ENCODE measurements at regions of chr1 and their contacts with region 1.

Region 1: DNA sequence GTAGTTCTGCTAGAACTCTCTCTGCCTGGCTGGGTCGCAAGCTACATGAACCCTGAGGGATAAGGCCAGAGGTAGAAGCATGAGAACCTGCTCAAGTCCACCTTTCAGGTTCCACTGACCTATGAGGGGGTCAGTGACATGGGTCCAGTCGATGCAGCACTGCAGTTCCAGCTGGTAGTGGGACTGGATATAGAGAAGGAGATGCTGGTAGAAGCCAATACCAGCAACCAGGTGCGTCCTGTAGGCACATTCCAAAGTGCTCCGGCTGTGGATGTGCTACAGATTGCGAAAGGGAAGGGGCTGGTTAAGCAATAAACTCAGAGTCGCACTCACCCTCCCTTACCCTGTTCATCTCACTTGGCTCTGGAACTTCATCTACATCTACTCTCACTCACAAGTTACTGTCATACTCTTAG is 5.7 kb downstream of the SMG5 start:
- DNase-seq: no peak
- H3K4me3 ChIP-seq: no peak overlapping the region
- H3K27ac ChIP-seq: no peak overlapping the region
- H3K4me1 ChIP-seq: peaks cover 8% of the 10 kb centered on the region
- H3K27me3 ChIP-seq: no peaks in the 10 kb centered on the region
- CTCF ChIP-seq: no peak

Region 2: GRCh38 chr1:156146020-156146768 is 130.8 kb before region 1 on chr1:
- CTCF ChIA-PET with region 1: interaction called, 10 read pairs
- POLR2A ChIA-PET with region 1: no interaction called
- intact Hi-C with region 1: no loop called
- DNase-seq: peak; percentile 93
- H3K4me3 ChIP-seq: peak overlapping the region; percentile 26
- H3K27ac ChIP-seq: no peak overlapping the region
- H3K4me1 ChIP-seq: peaks cover 10% of the 10 kb centered on the region
- H3K27me3 ChIP-seq: no peaks in the 10 kb centered on the region
- CTCF ChIP-seq: peak; percentile 78

Region 3: GRCh38 chr1:156338180-156338973 is 61.4 kb after region 1 on chr1 and contains the starts of genes CCT3 and TSACC:
- CTCF ChIA-PET with region 1: no interaction called
- POLR2A ChIA-PET with region 1: interaction called, 5 read pairs
- intact Hi-C with region 1: loop called (anchors 10 kb)
- DNase-seq: peak; percentile 100
- H3K4me3 ChIP-seq: peak within 1 kb of the TSS; percentile 88
- H3K27ac ChIP-seq: peak within 1 kb of the TSS; percentile 86
- H3K4me1 ChIP-seq: peaks cover 14% of the 10 kb centered on the region
- H3K27me3 ChIP-seq: no peaks in the 10 kb centered on the region
- CTCF ChIP-seq: no peak
- total RNA-seq, gene CCT3: 619 and 678 TPM in 2 replicates
- total RNA-seq, gene TSACC: 1.0 TPM in 1 of 2 replicates, not detected in the other